Left lung (tissue), 14 donors: ENCODE measurements at regions of chr18 and their contacts with region 1.

Region 1: GRCh38 chr18:70289351-70290330 is 796 bp downstream of the SOCS6 start:
- DNase-seq: peak in 3 of 4 donors; percentile 43 to 85 (median 59)
- ATAC-seq: peak; percentile 74
- H3K4me3 ChIP-seq: peak overlapping the region; percentile 56 to 60
- H3K27ac ChIP-seq: peak overlapping the region; percentile 82 to 89
- H3K4me1 ChIP-seq: peaks cover 14 to 42% of the 10 kb centered on the region in 2 donors
- H3K27me3 ChIP-seq: peaks cover 0 to 11% of the 10 kb centered on the region in 2 donors
- CTCF ChIP-seq: no peak

Region 2: GRCh38 chr18:70421471-70422390 is 132.1 kb after region 1 on chr18:
- intact Hi-C with region 1: loop called in 1 of 2 experiments (anchors 10 kb)
- DNase-seq: peak in 2 of 4 donors; percentile 86 to 87
- ATAC-seq: peak; percentile 92
- H3K4me3 ChIP-seq: no peak overlapping the region
- H3K27ac ChIP-seq: peak overlapping the region; percentile 37 to 67
- H3K4me1 ChIP-seq: peaks cover 18 to 42% of the 10 kb centered on the region in 2 donors
- H3K27me3 ChIP-seq: no peaks in the 10 kb centered on the region
- CTCF ChIP-seq: no peak